ENCODE measurements at regions of chr7 and their contacts with region 1.

Region 1: GRCh38 chr7:25844102-25844870 is 307.7 kb upstream of the NFE2L3 start:
- DNase-seq: no peak
- ATAC-seq: no peak
- H3K4me3 ChIP-seq: no peak overlapping the region
- H3K27ac ChIP-seq: peak overlapping the region in 2 of 10 donors; percentile 18 to 51
- H3K4me1 ChIP-seq: peaks cover 0 to 91% (median 61%) of the 10 kb centered on the region in 9 donors
- H3K27me3 ChIP-seq: peaks cover 0 to 3% (median 0%) of the 10 kb centered on the region in 7 donors
- CTCF ChIP-seq: no peak

Region 2: DNA sequence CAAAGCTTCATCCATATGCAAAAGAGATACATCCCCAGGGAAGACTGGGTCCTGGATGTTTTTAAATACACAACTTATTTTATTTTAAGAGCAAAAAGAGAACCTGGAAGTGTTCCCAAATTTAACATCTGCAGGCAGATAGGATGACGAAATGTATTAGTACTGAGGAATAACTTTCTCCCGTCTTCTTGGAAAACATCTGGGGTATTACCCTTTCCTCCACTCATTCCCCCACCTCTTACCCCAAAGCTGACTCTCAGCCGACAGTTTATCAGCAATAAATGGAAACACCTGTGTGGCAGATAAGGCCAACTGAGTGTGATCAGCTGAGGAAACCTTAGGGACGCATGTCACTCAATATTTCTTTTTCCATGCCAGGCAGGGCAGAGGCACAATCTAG is 180.4 kb before region 1 on chr7:
- intact Hi-C with region 1: loop called in 2 of 10 experiments (anchors 5 to 10 kb)
- DNase-seq: peak in 1 of 2 donors; percentile 18
- ATAC-seq: peak in 7 of 8 donors; percentile 49 to 84 (median 75)
- H3K4me3 ChIP-seq: no peak overlapping the region
- H3K27ac ChIP-seq: peak overlapping the region in 5 of 10 donors; percentile 42 to 72 (median 63)
- H3K4me1 ChIP-seq: peaks cover 0 to 36% (median 18%) of the 10 kb centered on the region in 9 donors
- H3K27me3 ChIP-seq: no peaks in the 10 kb centered on the region
- CTCF ChIP-seq: no peak

Region 3: DNA sequence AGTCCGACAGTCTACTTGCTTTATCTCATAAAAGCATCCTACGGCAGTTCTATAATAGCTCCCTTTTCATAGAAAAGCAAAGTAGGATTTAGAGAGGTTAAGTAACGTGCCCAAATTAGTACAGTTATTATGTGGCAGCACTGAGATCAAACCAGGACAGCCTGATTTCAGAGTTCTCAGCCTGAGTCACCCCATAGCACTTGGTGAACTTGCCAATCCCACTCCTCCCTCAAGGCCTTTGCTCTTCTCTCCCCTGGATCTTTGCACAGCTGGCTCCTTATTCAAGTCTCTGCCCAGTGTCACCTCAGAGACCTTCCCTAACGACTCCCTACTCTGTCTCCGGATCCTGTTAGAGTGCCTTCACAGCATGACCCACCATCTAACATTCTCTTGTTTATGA is 130.3 kb before region 1 on chr7:
- intact Hi-C with region 1: loop called in 1 of 10 experiments (anchors 5 kb)
- DNase-seq: no peak
- ATAC-seq: peak in 1 of 8 donors; percentile 66
- H3K4me3 ChIP-seq: no peak overlapping the region
- H3K27ac ChIP-seq: no peak overlapping the region
- H3K4me1 ChIP-seq: peaks cover 0 to 36% (median 25%) of the 10 kb centered on the region in 9 donors
- H3K27me3 ChIP-seq: no peaks in the 10 kb centered on the region
- CTCF ChIP-seq: no peak

Region 4: DNA sequence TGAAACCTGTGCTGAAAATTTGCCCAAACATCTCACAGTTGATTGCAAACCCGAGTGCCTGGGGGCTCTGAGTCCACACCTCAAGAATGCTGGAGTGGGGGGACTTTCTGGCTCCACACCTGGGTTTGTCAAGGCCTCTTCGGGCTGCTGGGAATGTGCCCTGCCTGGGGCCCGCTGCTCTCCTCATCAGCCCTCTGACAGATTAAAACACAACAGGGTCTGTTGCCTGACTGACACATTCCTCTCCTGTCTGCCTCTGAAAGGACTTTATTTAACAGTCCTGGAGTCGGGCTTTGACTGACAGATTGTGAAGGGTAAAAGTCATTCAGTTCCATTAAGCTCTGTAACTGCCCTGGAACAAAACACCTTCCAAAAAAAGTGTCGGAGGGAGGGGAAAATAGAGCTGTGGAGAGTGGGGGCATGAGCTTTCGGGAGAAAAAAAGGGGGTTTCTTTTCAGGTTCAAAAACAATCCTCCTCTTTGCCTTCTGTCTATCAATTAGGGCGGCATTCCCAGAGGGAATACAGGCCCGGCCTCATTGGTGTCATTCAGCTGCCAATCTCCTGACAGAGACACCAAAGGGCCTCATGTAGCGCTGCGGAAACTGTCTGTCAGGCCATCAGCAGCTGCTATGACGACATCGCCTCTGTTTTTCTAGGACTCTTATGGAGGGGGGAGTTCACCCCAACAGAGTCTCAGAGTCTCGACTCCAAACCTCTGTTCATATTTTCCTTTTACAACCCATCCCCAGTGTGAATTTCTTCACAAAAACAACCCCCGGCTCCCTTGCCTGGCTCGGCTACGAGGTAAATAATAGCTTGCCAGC is 91.1 kb before region 1 on chr7:
- intact Hi-C with region 1: loop called in 1 of 10 experiments (anchors 5 kb)
- DNase-seq: no peak
- ATAC-seq: peak in 7 of 8 donors; percentile 8 to 59 (median 39)
- H3K4me3 ChIP-seq: no peak overlapping the region
- H3K27ac ChIP-seq: peak overlapping the region in 4 of 10 donors; percentile 27 to 68 (median 42)
- H3K4me1 ChIP-seq: peaks cover 0 to 18% (median 9%) of the 10 kb centered on the region in 9 donors
- H3K27me3 ChIP-seq: no peaks in the 10 kb centered on the region
- CTCF ChIP-seq: no peak

Region 5: GRCh38 chr7:25777969-25778708 is 66.1 kb before region 1 on chr7:
- intact Hi-C with region 1: no loop called
- DNase-seq: no peak
- ATAC-seq: peak in 1 of 8 donors; percentile 22
- H3K4me3 ChIP-seq: no peak overlapping the region
- H3K27ac ChIP-seq: no peak overlapping the region
- H3K4me1 ChIP-seq: peaks cover 0 to 15% (median 0%) of the 10 kb centered on the region in 9 donors
- H3K27me3 ChIP-seq: no peaks in the 10 kb centered on the region
- CTCF ChIP-seq: no peak

Region 6: GRCh38 chr7:25789701-25790640 is 54.3 kb before region 1 on chr7:
- intact Hi-C with region 1: loop called in 2 of 10 experiments (anchors 5 kb)
- DNase-seq: no peak
- ATAC-seq: peak in 7 of 8 donors; percentile 18 to 58 (median 37)
- H3K4me3 ChIP-seq: no peak overlapping the region
- H3K27ac ChIP-seq: peak overlapping the region in 6 of 10 donors; percentile 26 to 71 (median 46)
- H3K4me1 ChIP-seq: peaks cover 0 to 21% (median 2%) of the 10 kb centered on the region in 9 donors
- H3K27me3 ChIP-seq: no peaks in the 10 kb centered on the region
- CTCF ChIP-seq: no peak

Measured in heart right ventricle (tissue), 16 donors.